ENCODE measurements at regions of chr12 and their contacts with region 1.

Region 1: GRCh38 chr12:10140001-10140400 is 10.0 kb upstream of the CLEC7A start:
- DNase-seq: peak; percentile 41 to 56
- H3K4me3 ChIP-seq: no peak overlapping the region
- H3K27ac ChIP-seq: no peak overlapping the region
- H3K4me1 ChIP-seq: no peaks in the 10 kb centered on the region
- H3K27me3 ChIP-seq: no peaks in the 10 kb centered on the region
- CTCF ChIP-seq: peak; percentile 82

Region 2: DNA sequence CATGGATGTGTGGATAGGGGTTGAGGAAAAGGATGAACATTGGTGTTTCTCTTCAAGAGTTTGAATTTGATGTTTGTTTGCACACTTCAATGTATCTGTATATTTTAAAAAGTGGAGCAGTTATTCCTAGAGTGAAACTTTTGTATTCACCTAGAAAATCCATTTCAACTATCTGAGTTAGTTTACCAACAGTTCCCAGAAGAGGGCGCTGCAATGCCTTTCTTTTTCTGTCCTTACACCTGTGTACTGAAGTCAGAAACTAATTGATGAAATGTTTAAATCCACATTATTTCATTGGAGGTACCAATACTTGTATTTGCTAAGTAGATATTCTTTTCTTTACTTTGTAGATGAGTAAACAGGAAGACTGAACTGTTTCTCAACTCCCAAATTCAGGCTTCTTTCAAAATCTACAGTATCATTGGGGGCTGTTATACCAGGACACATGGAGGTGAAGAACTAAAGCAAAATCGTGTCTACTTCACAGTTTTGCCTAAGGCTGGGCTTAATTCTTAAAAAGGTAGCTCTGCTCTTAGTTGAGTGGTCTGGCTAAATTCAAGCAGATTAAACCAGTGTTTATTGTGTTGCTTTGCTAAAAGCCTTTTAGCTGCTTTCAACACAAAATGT is 505.7 kb before region 1 on chr12:
- CTCF ChIA-PET with region 1: no interaction called
- POLR2A ChIA-PET with region 1: no interaction called
- intact Hi-C with region 1: loop called (anchors 2 kb)
- DNase-seq: peak; percentile 43 to 56
- H3K4me3 ChIP-seq: no peak overlapping the region
- H3K27ac ChIP-seq: no peak overlapping the region
- H3K4me1 ChIP-seq: peaks cover 20% of the 10 kb centered on the region
- H3K27me3 ChIP-seq: no peaks in the 10 kb centered on the region
- CTCF ChIP-seq: peak; percentile 90

Region 3: GRCh38 chr12:9711664-9712063 is 428.3 kb before region 1 on chr12:
- CTCF ChIA-PET with region 1: no interaction called
- POLR2A ChIA-PET with region 1: no interaction called
- intact Hi-C with region 1: no loop called
- DNase-seq: no peak
- H3K4me3 ChIP-seq: no peak overlapping the region
- H3K27ac ChIP-seq: no peak overlapping the region
- H3K4me1 ChIP-seq: peaks cover 4% of the 10 kb centered on the region
- H3K27me3 ChIP-seq: no peaks in the 10 kb centered on the region
- CTCF ChIP-seq: no peak

Region 4: GRCh38 chr12:9797722-9798619 is 342.0 kb before region 1 on chr12:
- CTCF ChIA-PET with region 1: interaction called, 5 read pairs
- POLR2A ChIA-PET with region 1: no interaction called
- intact Hi-C with region 1: loop called (anchors 1 kb)
- DNase-seq: peak; percentile 83 to 94
- H3K4me3 ChIP-seq: no peak overlapping the region
- H3K27ac ChIP-seq: no peak overlapping the region
- H3K4me1 ChIP-seq: peaks cover 39% of the 10 kb centered on the region
- H3K27me3 ChIP-seq: no peaks in the 10 kb centered on the region
- CTCF ChIP-seq: peak; percentile 75

Region 5: GRCh38 chr12:9869307-9870161 is 270.5 kb before region 1 on chr12 and contains the start of gene CLEC2B:
- CTCF ChIA-PET with region 1: interaction called, 10 read pairs
- POLR2A ChIA-PET with region 1: no interaction called
- intact Hi-C with region 1: no loop called
- DNase-seq: peak; percentile 18 to 83
- H3K4me3 ChIP-seq: peak within 1 kb of the TSS; percentile 68
- H3K27ac ChIP-seq: peak within 1 kb of the TSS; percentile 63
- H3K4me1 ChIP-seq: peaks cover 17% of the 10 kb centered on the region
- H3K27me3 ChIP-seq: no peaks in the 10 kb centered on the region
- CTCF ChIP-seq: no peak
- total RNA-seq, gene CLEC2B: 3.4 and 3.9 TPM in 2 replicates

Region 6: DNA sequence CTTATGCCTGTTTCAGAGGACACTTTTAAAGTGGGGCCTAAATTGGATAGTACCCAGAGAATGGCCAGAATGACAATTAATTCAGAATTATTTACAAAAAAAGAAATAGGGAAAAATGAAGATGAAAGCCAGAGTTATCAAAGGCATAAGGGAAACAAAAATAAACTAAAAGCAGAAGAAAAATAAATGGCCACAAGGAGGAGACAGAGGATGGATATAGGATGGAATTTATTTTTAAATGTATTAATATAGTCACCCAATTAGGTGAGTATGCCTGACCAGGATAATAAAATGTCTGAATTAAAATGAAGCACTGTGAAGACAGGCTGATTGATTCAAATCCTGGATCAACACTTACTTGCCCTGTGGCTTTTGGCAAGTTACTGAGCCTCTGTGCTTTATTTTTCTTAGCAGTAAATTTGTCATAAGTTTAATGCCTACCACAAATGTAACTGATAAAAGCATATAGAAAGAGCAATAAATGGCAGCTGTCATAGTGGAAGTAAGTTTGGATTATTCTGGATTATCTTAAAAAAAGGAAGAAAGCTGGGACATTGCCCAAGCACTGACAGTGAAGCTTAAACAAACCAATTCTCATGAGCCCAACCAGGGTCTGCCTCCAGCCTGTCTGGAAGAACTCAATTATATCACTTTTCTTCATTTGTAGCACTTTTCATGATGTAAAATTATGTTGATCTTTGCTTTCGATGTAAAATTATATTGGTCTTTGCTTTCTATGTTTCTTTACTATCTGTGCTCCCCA is 106.0 kb before region 1 on chr12:
- CTCF ChIA-PET with region 1: interaction called, 9 read pairs
- POLR2A ChIA-PET with region 1: no interaction called
- intact Hi-C with region 1: loop called (anchors 1 kb)
- DNase-seq: no peak
- H3K4me3 ChIP-seq: no peak overlapping the region
- H3K27ac ChIP-seq: no peak overlapping the region
- H3K4me1 ChIP-seq: no peaks in the 10 kb centered on the region
- H3K27me3 ChIP-seq: no peaks in the 10 kb centered on the region
- CTCF ChIP-seq: peak; percentile 80